Caco-2 (cell line): ENCODE measurements at regions of chr5 and their contacts with region 1.

Region 1: DNA sequence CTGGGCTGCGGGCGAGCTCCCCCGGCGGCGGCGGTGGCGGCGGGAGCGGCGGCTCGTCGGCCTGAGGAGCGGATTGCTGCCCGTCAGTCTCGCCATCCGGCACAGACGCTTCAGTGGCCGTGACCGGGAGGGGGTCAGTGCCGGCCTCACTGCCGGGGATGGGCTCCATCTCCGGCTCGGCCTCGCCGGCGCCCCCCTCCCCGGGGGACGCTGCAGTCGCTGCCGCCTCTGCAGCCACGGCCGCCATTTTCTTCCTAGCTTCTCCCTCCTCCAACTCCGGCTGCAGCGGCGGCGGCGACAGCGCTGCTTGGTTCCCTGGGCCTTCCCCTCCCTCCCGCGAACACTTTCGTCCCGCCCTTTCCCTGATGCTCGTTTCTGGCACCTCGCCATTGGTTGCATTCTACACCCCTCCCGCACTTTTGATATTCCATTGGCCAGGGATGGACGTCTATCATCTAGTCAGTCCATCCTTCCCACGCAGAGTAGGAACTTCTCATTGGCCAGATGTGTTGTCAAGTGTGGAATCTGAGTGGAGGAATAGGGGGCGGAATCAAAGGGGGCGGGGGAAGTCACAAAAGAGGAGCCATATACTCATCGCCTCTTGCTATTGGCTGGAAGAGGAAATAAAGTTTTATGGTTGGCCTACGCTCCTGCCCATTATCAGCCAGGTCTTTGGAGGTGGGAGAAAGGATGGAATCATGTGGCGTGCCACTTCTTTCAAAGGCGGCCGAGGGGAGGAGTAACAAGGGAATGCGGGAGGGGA is at the start of gene PWWP2A:
- DNase-seq: peak; percentile 98 to 99
- H3K4me3 ChIP-seq: peak within 1 kb of the TSS; percentile 91
- H3K4me3 Mint-ChIP-seq: peak within 1 kb of the TSS; percentile 93
- H3K27ac Mint-ChIP-seq: peak within 1 kb of the TSS; percentile 93
- H3K4me1 ChIP-seq: peaks cover 7% of the 10 kb centered on the region; the same call in 1 of the 2 replicates
- H3K4me1 Mint-ChIP-seq: peaks cover 10% of the 10 kb centered on the region
- H3K27me3 ChIP-seq: no peaks in the 10 kb centered on the region
- H3K27me3 Mint-ChIP-seq: no peaks in the 10 kb centered on the region
- CTCF ChIP-seq: peak in 1 of 2 experiments; percentile 9
- total RNA-seq, gene PWWP2A: 34.4 and 36.7 TPM in 2 replicates

Region 2: DNA sequence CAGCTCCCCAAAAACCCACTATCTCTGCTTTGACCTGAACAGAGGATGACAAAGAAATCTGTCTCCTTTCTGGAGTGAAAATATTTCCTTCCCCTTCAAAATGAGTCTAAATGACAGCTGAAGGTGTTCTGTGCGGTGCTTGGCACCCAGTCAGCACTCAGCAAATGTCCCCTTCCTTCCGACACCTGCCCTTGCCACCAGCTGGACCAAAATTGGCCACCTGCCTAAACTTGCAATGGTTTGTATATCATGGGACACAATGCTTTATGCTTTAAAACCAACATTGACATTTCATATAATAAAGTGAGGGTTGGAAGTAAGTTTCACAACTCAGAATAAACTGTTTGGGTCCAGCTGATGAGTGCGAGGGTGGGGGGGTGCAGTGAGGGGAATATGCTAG is 117.9 kb before region 1 on chr5:
- CTCF ChIA-PET with region 1: no interaction called
- POLR2A ChIA-PET with region 1: no interaction called
- intact Hi-C with region 1: no loop called
- DNase-seq: no peak
- H3K4me3 ChIP-seq: no peak overlapping the region
- H3K4me3 Mint-ChIP-seq: no peak overlapping the region
- H3K27ac Mint-ChIP-seq: no peak overlapping the region
- H3K4me1 ChIP-seq: no peaks in the 10 kb centered on the region
- H3K4me1 Mint-ChIP-seq: no peaks in the 10 kb centered on the region
- H3K27me3 ChIP-seq: no peaks in the 10 kb centered on the region; the same call in 1 of the 2 replicates
- H3K27me3 Mint-ChIP-seq: peaks cover 7% of the 10 kb centered on the region
- CTCF ChIP-seq: no peak

Region 3: DNA sequence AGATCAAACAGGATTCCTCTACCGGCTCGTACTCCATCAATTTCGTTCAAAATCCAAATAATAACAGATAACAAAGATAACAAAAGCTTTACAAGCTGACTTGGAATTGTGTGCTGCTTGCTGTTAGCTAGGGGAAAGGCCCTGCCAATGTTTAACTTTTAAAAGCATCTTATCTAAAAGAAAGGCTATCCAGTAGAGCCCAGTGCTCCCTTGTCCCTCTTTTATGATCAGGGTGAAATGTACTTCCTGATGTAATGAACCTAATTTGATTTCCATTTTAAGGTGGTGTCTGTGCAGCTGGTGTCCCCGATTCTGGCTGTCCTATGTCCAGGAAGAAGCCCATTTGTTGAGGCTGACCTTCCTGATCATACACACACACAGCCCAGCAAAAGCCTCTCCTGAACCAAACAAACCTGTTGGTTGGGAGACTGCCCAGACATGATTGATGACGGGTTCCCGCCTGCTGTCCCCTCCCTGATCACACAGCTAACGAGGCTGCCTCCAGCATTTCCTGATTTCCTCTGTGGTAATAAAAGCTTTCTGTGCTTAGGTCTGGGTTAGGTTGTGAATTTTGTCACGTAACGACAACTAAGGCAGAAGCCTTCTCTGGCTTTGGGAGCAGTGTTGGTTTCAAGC is 54.2 kb before region 1 on chr5:
- CTCF ChIA-PET with region 1: no interaction called
- POLR2A ChIA-PET with region 1: no interaction called
- intact Hi-C with region 1: loop called (anchors 1 kb)
- DNase-seq: peak; percentile 84 to 93
- H3K4me3 ChIP-seq: no peak overlapping the region
- H3K4me3 Mint-ChIP-seq: peak overlapping the region; percentile 60
- H3K27ac Mint-ChIP-seq: peak overlapping the region; percentile 86
- H3K4me1 ChIP-seq: peaks cover 30% of the 10 kb centered on the region
- H3K4me1 Mint-ChIP-seq: peaks cover 13% of the 10 kb centered on the region
- H3K27me3 ChIP-seq: no peaks in the 10 kb centered on the region
- H3K27me3 Mint-ChIP-seq: no peaks in the 10 kb centered on the region
- CTCF ChIP-seq: no peak

Region 4: DNA sequence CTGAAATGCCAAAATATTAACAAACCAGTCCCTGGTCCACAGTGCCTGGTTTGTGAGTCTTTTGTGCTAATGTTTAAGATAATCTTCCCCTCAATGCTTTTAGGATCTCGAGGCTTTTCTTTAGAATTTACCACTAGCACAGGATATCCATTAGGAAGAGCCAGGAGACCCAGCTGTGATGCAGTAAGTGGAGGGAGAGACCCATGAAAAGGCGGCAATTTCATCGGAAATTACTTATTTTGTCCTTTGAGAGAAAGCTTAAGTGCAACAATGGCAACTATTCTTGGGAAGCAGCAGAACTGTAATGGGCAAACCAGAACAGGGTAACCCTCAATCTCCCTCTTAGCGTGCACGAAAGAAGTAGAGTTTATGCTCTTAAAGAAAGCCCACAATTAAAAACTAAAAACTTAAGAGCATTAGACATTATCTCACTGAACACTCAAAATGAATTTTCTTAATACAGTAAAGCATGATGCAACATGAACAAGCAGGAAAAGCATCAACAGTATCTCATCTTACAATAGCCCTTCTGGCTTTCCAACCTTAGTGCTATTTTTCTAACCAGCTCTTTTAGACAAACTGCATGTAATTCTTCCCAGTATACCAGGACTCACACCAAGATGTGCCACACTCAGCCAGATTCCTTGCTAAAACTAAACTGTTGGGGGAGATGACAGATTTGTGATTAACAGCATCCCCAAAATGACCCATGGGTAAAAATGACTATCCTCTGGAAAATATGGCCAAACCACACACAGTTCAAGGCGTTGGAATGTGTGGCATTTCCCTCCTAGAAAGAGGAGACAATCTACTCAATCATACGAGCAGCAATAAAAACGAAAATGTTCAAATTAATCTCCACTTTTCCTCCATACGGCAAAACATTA is 36.5 kb before region 1 on chr5:
- CTCF ChIA-PET with region 1: interaction called, 4 read pairs
- POLR2A ChIA-PET with region 1: interaction called, 5 read pairs
- intact Hi-C with region 1: loop called (anchors 1 kb)
- DNase-seq: no peak
- H3K4me3 ChIP-seq: no peak overlapping the region
- H3K4me3 Mint-ChIP-seq: no peak overlapping the region
- H3K27ac Mint-ChIP-seq: no peak overlapping the region
- H3K4me1 ChIP-seq: peaks cover 34% of the 10 kb centered on the region
- H3K4me1 Mint-ChIP-seq: peaks cover 25% of the 10 kb centered on the region
- H3K27me3 ChIP-seq: no peaks in the 10 kb centered on the region
- H3K27me3 Mint-ChIP-seq: no peaks in the 10 kb centered on the region
- CTCF ChIP-seq: no peak

Region 5: GRCh38 chr5:160155017-160155745 is 35.9 kb after region 1 on chr5:
- CTCF ChIA-PET with region 1: interaction called, 3 read pairs
- POLR2A ChIA-PET with region 1: no interaction called
- intact Hi-C with region 1: loop called (anchors 1 kb)
- DNase-seq: peak; percentile 46 to 66
- H3K4me3 ChIP-seq: no peak overlapping the region
- H3K4me3 Mint-ChIP-seq: peak overlapping the region; percentile 38
- H3K27ac Mint-ChIP-seq: peak overlapping the region; percentile 90
- H3K4me1 ChIP-seq: peaks cover 22% of the 10 kb centered on the region
- H3K4me1 Mint-ChIP-seq: peaks cover 17% of the 10 kb centered on the region
- H3K27me3 ChIP-seq: no peaks in the 10 kb centered on the region
- H3K27me3 Mint-ChIP-seq: no peaks in the 10 kb centered on the region
- CTCF ChIP-seq: no peak

Region 6: DNA sequence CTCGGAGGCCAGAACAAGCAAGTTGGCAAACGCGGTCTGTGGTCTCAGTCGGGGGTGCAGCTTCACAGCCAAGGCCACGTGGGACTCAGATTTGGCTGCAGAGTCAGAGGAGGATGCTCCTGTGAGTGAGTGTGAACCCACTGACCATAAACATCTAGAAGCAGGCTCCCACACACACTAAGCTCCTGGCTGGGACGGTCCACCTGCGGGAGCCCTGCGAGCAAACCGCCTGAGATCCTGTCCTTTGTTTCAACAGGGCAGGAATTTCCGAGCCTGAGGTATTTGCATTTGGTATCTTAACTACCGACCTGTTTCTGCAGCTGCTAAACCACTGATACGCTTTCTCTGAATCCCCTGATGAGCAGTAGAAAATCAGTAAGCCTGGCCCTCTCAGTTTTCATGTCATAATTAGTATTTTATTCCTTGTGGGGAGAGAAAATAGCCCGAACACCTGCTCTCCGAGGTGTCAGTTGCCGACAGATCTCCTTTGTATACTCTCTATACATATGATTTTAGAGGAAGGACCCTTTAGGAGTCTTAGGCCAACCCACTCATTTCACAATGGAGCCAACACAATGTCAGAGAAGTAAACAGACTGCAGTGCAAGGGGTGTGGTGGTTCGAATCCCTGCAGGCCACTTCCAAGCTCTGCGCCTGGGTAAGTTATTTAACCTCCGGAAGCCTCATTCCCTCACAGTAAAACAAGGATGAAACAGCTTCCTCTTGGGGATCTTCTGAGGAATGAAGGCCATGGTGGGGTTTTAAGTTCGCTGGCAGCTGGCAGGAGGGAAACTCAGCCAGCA is 40.9 kb after region 1 on chr5:
- CTCF ChIA-PET with region 1: interaction called, 3 read pairs
- POLR2A ChIA-PET with region 1: no interaction called
- intact Hi-C with region 1: loop called (anchors 1 kb)
- DNase-seq: peak; percentile 83 to 90
- H3K4me3 ChIP-seq: no peak overlapping the region
- H3K4me3 Mint-ChIP-seq: peak overlapping the region; percentile 25
- H3K27ac Mint-ChIP-seq: peak overlapping the region; percentile 87
- H3K4me1 ChIP-seq: peaks cover 36% of the 10 kb centered on the region
- H3K4me1 Mint-ChIP-seq: peaks cover 22% of the 10 kb centered on the region
- H3K27me3 ChIP-seq: no peaks in the 10 kb centered on the region
- H3K27me3 Mint-ChIP-seq: no peaks in the 10 kb centered on the region
- CTCF ChIP-seq: no peak

Region 7: GRCh38 chr5:160188142-160189015 is 69.1 kb after region 1 on chr5:
- CTCF ChIA-PET with region 1: interaction called, 6 read pairs
- POLR2A ChIA-PET with region 1: interaction called, 7 read pairs
- intact Hi-C with region 1: loop called (anchors 1 kb)
- DNase-seq: peak; percentile 84 to 96
- H3K4me3 ChIP-seq: peak overlapping the region; percentile 43
- H3K4me3 Mint-ChIP-seq: peak overlapping the region; percentile 75
- H3K27ac Mint-ChIP-seq: peak overlapping the region; percentile 86
- H3K4me1 ChIP-seq: peaks cover 17% of the 10 kb centered on the region
- H3K4me1 Mint-ChIP-seq: peaks cover 23% of the 10 kb centered on the region
- H3K27me3 ChIP-seq: no peaks in the 10 kb centered on the region
- H3K27me3 Mint-ChIP-seq: no peaks in the 10 kb centered on the region
- CTCF ChIP-seq: peak in 1 of 2 experiments; percentile 11

Region 8: DNA sequence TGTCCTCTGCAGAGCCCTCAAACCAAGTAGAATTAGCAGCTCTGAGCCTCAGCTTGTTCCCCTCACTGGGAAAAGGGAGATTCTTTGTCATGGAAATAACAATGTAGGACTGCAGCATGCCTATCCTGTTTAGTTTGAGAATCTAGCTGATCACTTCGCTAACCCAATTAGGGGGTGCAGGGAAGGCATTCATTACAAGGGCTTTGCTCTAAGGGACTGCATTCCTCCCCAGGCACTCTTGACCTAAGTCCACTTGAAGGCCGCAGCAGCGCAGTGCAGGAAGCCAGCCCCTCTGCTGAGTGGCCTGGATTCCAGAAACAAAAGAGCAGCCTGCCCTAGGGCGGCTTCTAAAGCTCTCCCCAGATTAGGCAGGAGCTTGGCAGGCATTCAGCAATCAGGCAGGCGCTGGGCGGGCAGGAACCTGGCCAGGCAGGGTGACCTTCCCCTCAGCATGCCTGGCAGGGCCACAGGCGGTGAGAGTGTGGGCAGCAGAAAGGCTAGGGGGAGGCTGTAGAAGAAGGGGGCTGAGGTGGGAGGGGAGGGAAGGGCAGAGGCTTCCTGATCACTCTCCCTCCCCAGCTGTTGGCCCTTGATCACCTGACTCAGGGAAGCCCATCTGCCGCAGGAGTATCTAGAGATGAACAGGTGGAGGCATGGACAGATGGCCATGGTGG is 168.2 kb after region 1 on chr5:
- CTCF ChIA-PET with region 1: no interaction called
- POLR2A ChIA-PET with region 1: no interaction called
- intact Hi-C with region 1: loop called (anchors 1 kb)
- DNase-seq: peak; percentile 79 to 89
- H3K4me3 ChIP-seq: no peak overlapping the region
- H3K4me3 Mint-ChIP-seq: peak overlapping the region; percentile 29
- H3K27ac Mint-ChIP-seq: peak overlapping the region; percentile 94
- H3K4me1 ChIP-seq: peaks cover 35% of the 10 kb centered on the region
- H3K4me1 Mint-ChIP-seq: peaks cover 19% of the 10 kb centered on the region
- H3K27me3 ChIP-seq: no peaks in the 10 kb centered on the region
- H3K27me3 Mint-ChIP-seq: no peaks in the 10 kb centered on the region
- CTCF ChIP-seq: no peak